HepG2 (cell line): ENCODE measurements at regions of chr17 and their contacts with region 1.

Region 1: DNA sequence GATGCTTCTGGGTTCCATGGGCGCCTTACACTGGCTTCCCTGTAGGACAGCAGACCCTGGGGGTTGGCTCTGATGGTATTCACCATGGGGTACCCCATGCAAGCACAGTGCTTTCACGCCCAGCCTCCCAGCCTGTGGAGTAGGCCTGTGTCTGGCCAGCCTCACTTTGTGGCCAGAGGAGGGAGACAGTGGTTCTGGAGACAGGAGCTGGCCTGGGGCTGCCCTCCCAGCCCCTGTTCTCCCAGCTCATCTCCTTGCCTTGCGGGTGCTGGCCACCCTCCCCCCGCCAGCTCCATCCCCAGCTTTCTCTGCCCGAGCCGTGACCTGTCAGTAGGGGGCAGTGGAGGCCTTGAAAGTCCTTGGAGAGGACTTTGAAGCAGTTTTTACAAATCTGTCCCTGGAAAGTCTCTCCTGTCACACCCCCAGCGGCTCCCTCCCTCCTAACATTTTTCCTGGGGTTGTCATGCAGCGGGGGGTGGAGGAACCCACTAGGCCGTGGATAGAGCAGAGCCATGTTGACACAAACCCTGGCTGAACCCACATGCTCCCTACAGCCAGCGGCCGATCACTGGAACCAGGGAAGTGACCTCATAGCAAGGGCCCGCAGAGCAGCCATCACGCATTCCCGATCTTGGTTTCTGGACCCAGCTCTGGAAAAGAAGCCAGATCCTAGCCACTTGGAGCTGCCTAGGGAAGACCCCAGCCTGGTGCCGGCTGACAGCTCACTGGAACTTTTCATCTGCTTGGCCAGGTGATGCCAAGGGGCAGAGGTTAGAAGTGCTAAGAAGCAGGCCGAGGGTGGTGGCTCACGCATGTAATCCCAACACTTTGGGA is 289.4 kb downstream of the SEC14L1 start:
- DNase-seq: peak; percentile 97
- ATAC-seq: peak; percentile 79
- H3K4me3 ChIP-seq: peak overlapping the region in 1 of 3 experiments; percentile 0; a peak in 1 of 6 replicates
- H3K27ac ChIP-seq: peak overlapping the region; percentile 61
- H3K4me1 ChIP-seq: peaks cover 50% of the 10 kb centered on the region
- H3K27me3 ChIP-seq: no peaks in the 10 kb centered on the region
- CTCF ChIP-seq: peak; percentile 96
- EP300 ChIP-seq: peak in 1 of 2 experiments; percentile 49; a peak in 1 of 4 replicates
- POLR2A ChIP-seq: no peak
- RAD21 ChIP-seq: peak; percentile 97

Region 2: DNA sequence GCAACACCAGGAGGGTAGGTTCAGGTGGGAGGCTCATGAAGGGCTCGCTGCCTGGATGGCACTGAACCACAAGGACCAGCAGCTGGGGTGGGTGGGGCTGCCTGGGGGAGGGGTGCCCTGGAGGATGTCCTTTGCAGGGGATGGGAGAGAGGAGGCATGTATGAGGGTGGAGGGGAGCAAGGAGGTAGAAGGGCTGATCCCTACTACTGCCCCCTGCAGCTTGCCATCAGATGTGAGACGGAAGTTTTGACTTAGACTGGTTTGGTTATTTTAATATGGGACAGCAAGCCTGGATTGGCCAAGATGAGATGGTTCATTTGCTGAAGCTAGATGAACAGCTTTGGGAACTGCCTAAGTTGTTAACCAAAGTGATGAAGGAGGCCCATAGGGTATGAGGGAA is 173.4 kb before region 1 on chr17:
- CTCF ChIA-PET with region 1: no interaction called
- POLR2A ChIA-PET with region 1: no interaction called
- in situ Hi-C with region 1: no loop called
- intact Hi-C with region 1: no loop called
- DNase-seq: no peak
- ATAC-seq: no peak
- H3K4me3 ChIP-seq: no peak overlapping the region
- H3K27ac ChIP-seq: no peak overlapping the region
- H3K4me1 ChIP-seq: peaks cover 32% of the 10 kb centered on the region
- H3K27me3 ChIP-seq: peaks cover 6 to 68% of the 10 kb centered on the region in 2 experiments; a peak in 4 of 5 replicates
- CTCF ChIP-seq: no peak
- EP300 ChIP-seq: no peak
- POLR2A ChIP-seq: no peak
- RAD21 ChIP-seq: no peak

Region 3: DNA sequence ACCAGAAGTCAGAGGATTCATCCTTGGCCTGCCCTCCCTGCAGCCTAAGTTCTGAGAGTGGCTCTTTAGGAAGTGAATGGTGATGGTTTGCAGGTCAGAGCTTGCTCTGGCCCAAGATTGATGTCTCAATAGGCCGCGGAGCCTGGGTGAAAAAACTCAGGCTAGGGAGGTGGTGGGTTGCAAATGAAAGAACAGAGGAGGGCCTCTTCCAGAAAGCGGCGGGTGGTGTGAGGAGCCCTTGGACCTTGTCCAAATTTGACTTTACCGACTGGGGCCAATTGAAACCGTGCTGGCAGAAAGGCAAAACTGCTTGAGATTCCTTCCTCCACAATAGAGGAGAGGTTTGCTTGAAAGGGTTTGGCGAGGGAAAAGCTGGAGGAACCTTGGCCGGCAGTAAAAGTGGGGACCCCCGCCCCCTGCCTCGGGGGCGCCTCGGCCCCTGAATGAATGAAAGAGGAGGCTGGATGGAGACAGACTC is 41.9 kb after region 1 on chr17:
- CTCF ChIA-PET with region 1: interaction called, 4 read pairs
- POLR2A ChIA-PET with region 1: interaction called, 3 read pairs
- in situ Hi-C with region 1: no loop called
- intact Hi-C with region 1: loop called (anchors 5 kb)
- DNase-seq: no peak
- ATAC-seq: no peak
- H3K4me3 ChIP-seq: no peak overlapping the region
- H3K27ac ChIP-seq: no peak overlapping the region
- H3K4me1 ChIP-seq: peaks cover 49% of the 10 kb centered on the region
- H3K27me3 ChIP-seq: no peaks in the 10 kb centered on the region
- CTCF ChIP-seq: no peak
- EP300 ChIP-seq: no peak
- POLR2A ChIP-seq: no peak
- RAD21 ChIP-seq: no peak

Region 4: DNA sequence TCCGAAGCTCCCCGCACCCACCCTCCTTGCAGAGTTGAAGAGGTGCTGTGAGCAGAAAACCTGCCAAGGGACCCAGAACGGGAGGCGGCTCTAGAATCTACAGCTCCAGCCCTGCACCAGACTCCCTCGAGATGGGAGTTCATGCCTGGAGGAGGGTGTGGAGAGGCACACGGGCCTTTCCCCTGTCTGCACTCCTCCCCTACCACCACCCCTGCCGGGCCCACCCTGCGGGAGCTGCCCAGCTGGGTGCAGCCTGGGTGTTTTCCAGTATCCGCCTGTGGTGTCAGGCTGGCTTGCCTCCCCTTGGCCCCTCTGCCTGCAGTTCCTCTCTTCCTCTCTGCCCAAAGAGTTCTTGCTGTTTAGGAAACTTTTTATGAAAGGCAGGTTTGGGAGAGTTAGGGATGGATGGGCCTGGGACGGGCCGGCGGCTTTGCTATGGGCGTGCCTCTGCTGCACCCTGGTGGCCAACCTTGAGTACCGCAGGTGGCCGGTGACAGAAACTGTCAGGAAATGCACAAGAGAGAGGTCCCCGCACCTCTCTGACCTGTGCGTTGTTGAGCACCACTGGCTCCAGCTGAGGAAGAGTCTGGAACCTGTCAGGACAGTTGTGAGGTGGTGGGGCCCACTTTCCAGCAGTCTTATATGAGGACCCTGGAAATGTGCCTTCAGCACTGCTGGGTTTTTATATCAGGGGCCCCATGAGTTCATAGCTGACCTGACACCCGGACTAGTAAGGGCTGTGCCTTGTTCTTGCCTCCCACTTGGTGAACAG is 64.7 kb after region 1 on chr17:
- CTCF ChIA-PET with region 1: interaction called, 46 read pairs
- POLR2A ChIA-PET with region 1: interaction called, 4 read pairs
- in situ Hi-C with region 1: loop called (anchors 5 kb)
- intact Hi-C with region 1: loop called (anchors 1 kb)
- DNase-seq: peak; percentile 62
- ATAC-seq: peak; percentile 58
- H3K4me3 ChIP-seq: no peak overlapping the region
- H3K27ac ChIP-seq: no peak overlapping the region
- H3K4me1 ChIP-seq: peaks cover 5% of the 10 kb centered on the region
- H3K27me3 ChIP-seq: no peaks in the 10 kb centered on the region
- CTCF ChIP-seq: peak; percentile 97
- EP300 ChIP-seq: no peak
- POLR2A ChIP-seq: 0 out of 4 replicates have a peak, but pooled peaks of 1 of the 2 experiments have one; percentile 13
- RAD21 ChIP-seq: peak; percentile 98